ENCODE measurements at regions of chr6 and their contacts with region 1.

Region 1: DNA sequence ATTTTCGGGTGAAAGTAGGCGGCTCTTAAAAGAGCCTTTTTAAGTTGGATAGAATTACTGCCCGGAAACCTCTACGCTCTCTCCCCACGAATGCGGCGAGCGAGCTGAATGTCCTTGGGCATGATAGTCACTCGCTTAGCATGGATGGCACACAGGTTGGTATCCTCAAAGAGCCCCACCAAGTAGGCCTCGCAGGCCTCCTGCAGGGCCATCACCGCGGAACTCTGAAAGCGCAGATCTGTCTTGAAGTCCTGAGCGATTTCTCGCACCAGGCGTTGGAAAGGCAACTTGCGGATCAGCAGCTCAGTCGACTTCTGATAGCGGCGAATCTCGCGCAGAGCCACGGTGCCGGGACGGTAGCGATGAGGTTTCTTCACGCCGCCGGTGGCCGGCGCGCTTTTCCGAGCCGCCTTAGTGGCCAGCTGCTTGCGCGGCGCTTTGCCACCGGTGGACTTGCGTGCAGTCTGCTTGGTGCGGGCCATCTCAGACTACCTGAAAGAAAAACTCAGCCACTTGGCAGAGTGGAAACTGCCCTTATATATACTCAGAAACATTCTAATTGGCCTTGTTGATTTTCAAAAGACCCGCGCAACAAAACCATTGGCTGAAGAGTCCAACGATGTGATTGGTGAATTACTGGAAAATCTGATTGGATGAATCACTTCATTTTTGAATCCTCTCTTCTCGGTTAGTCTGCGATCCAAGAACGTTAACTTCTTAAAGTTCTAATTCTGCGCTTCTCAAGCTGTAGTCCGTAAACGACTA is 93.9 kb upstream of the BTN3A2 start:
- DNase-seq: peak; percentile 76 to 77
- H3K4me3 ChIP-seq: peak overlapping the region; percentile 50 to 67
- H3K27ac ChIP-seq: peak overlapping the region; percentile 80 to 86
- H3K4me1 ChIP-seq: peaks cover 0 to 16% (median 10%) of the 10 kb centered on the region in 4 donors
- H3K27me3 ChIP-seq: peaks cover 0 to 8% of the 10 kb centered on the region in 2 donors
- CTCF ChIP-seq: no peak

Region 2: GRCh38 chr6:25302677-25303128 is 968.4 kb before region 1 on chr6:
- intact Hi-C with region 1: no loop called
- DNase-seq: no peak
- H3K4me3 ChIP-seq: no peak overlapping the region
- H3K27ac ChIP-seq: peak overlapping the region; percentile 91 to 95
- H3K4me1 ChIP-seq: peaks cover 0 to 100% (median 61%) of the 10 kb centered on the region in 4 donors
- H3K27me3 ChIP-seq: no peaks in the 10 kb centered on the region
- CTCF ChIP-seq: no peak

Region 3: DNA sequence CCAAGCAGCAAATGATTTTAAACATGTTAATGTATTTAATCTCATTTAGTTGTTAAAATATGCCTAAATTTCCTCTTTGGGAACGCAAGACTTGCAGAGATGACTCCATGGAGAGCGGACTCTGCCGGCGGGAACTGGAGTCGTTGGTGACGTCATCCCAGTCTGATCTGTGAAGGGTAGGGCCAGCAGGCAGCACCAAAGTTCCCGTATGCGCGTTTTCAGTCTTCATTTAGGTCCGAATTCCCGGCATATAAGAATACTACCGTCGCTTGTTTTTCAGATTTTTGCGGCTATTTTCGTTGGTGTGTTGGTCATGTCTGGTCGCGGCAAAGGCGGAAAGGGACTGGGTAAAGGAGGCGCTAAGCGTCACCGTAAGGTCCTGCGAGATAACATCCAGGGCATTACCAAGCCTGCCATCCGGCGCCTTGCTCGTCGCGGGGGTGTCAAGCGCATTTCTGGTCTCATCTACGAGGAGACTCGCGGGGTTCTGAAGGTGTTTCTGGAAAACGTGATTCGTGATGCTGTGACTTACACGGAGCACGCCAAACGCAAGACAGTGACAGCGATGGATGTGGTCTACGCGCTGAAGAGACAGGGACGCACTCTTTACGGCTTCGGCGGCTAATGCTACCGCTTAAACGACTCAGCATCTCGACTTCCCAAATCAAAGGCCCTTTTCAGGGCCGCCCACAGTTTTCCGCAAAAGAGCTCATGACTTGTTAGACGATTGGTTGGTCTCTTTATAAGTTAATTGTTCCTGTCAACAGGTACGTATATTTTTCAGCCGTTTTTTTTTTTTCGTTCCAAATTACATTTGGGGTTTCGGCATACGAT is 66.5 kb before region 1 on chr6:
- intact Hi-C with region 1: loop called (anchors 5 kb)
- DNase-seq: peak; percentile 93 to 96
- H3K4me3 ChIP-seq: peak overlapping the region; percentile 68 to 78
- H3K27ac ChIP-seq: peak overlapping the region; percentile 90 to 96
- H3K4me1 ChIP-seq: peaks cover 0 to 25% (median 3%) of the 10 kb centered on the region in 4 donors
- H3K27me3 ChIP-seq: no peaks in the 10 kb centered on the region
- CTCF ChIP-seq: peak in 1 of 2 experiments; percentile 18

Measured in tibial artery (tissue), 4 donors.